Activated T-helper 2 cell treated with anti-CD3 and anti-CD28 coated beads, Interferon-gamma antibody, Interleukin-2, Interleukin-4, amounts not matched to agents 10 μg/mL and 5 μg/mL and 100 μg/mL, durations not matched to agents 14 hours and 24 hours and 36 hours (primary cell): ENCODE measurements at regions of chr15 and their contacts with region 1.

Region 1: GRCh38 chr15:72230196-72231065 is 559 bp downstream of the PKM start:
- DNase-seq: peak; percentile 68
- H3K4me3 Mint-ChIP-seq: peak overlapping the region; percentile 99
- H3K27ac Mint-ChIP-seq: peak overlapping the region; percentile 100
- H3K4me1 Mint-ChIP-seq: peaks cover 33% of the 10 kb centered on the region
- H3K27me3 Mint-ChIP-seq: no peaks in the 10 kb centered on the region

Region 2: GRCh38 chr15:72117486-72118399 is 112.7 kb before region 1 on chr15 and contains the start of gene MYO9A:
- intact Hi-C with region 1: loop called (anchors 5 kb)
- DNase-seq: peak; percentile 95
- H3K4me3 Mint-ChIP-seq: peak within 1 kb of the TSS; percentile 90
- H3K27ac Mint-ChIP-seq: peak within 1 kb of the TSS; percentile 97
- H3K4me1 Mint-ChIP-seq: peaks cover 30% of the 10 kb centered on the region
- H3K27me3 Mint-ChIP-seq: peaks cover 8% of the 10 kb centered on the region
- total RNA-seq, gene MYO9A: 25.1 and 26.2 TPM in 2 replicates

Region 3: GRCh38 chr15:72199711-72200212 is 30.7 kb before region 1 on chr15:
- intact Hi-C with region 1: loop called (anchors 2 kb)
- DNase-seq: peak; percentile 58
- H3K4me3 Mint-ChIP-seq: no peak overlapping the region
- H3K27ac Mint-ChIP-seq: no peak overlapping the region
- H3K4me1 Mint-ChIP-seq: peaks cover 15% of the 10 kb centered on the region
- H3K27me3 Mint-ChIP-seq: peaks cover 6% of the 10 kb centered on the region

Region 4: DNA sequence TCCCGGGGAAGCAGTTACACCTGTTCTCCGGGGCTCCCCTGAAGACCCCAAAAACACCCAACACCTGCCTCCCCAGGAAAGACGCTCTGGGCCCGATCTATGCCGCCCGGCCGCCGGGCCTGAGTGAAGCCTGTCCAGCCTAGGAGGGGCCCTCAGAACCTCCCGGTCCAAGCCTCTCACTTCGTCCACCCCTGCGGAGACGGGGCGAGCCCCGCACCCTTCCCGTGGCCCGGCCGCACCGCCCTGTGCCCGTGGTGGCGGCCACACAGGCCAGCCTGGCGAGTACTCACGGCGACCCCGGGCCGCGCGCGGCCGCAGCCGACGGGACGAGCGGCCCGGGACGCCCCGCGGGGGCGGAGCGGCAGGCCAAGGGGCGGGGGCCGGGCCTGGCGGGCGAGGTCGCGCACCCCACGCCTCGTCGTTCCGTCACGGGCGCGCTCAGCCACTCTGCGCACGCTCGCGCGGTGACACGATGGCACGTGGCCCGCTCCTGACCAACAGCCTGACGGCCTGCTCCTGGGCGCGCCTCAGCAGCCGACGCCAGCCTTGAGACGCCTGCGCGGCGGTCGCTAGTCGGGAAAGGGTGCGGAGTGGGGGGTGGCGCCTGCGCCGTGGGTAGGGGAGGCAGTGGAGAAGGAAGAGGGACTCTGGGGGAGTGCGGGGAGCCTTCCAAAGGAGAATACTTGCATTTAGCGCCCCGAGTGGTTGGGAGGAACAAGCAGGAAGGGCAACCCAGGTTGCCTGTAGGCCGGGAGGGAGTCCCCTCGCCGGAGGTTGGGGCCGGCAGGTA is 42.0 kb after region 1 on chr15 and contains the start of gene PARP6:
- intact Hi-C with region 1: loop called (anchors 1 kb)
- DNase-seq: peak; percentile 99
- H3K4me3 Mint-ChIP-seq: peak within 1 kb of the TSS; percentile 93
- H3K27ac Mint-ChIP-seq: peak within 1 kb of the TSS; percentile 84
- H3K4me1 Mint-ChIP-seq: peaks cover 32% of the 10 kb centered on the region
- H3K27me3 Mint-ChIP-seq: peaks cover 6% of the 10 kb centered on the region
- total RNA-seq, gene PARP6: 65.4 and 73.1 TPM in 2 replicates

Region 5: GRCh38 chr15:72375847-72376581 is 145.6 kb after region 1 on chr15 and contains the start of gene HEXA:
- intact Hi-C with region 1: loop called (anchors 2 kb)
- DNase-seq: peak; percentile 96
- H3K4me3 Mint-ChIP-seq: peak within 1 kb of the TSS; percentile 89
- H3K27ac Mint-ChIP-seq: peak within 1 kb of the TSS; percentile 91
- H3K4me1 Mint-ChIP-seq: peaks cover 27% of the 10 kb centered on the region
- H3K27me3 Mint-ChIP-seq: peaks cover under 1% of the 10 kb centered on the region
- total RNA-seq, gene HEXA: 58.2 and 63.4 TPM in 2 replicates

Region 6: GRCh38 chr15:72473614-72474465 is 243.4 kb after region 1 on chr15 and contains the start of gene ARIH1:
- intact Hi-C with region 1: loop called (anchors 1 kb)
- DNase-seq: peak; percentile 95
- H3K4me3 Mint-ChIP-seq: peak within 1 kb of the TSS; percentile 95
- H3K27ac Mint-ChIP-seq: peak within 1 kb of the TSS; percentile 99
- H3K4me1 Mint-ChIP-seq: peaks cover 31% of the 10 kb centered on the region
- H3K27me3 Mint-ChIP-seq: no peaks in the 10 kb centered on the region
- total RNA-seq, gene ARIH1: 139 and 141 TPM in 2 replicates

Region 7: DNA sequence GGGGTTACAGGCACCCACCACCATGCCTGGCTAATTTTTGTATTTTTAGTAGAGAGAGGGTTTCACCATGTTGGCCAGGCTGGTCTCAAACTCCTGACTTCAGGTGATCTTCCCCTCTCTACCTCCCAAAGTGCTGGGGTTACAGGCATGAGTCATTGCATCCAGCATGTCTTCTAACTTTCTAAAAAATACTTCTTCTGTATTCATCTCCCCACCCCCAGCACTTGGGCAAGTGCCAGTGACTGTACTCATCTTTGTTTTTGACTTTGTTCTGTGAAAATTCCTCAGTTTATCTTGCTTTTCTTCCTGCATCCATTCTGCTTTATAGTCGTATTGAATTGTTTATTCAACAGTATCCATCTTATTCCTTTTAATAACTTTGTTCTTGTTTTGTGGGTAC is 291.3 kb after region 1 on chr15:
- intact Hi-C with region 1: no loop called
- DNase-seq: no peak
- H3K4me3 Mint-ChIP-seq: no peak overlapping the region
- H3K27ac Mint-ChIP-seq: no peak overlapping the region
- H3K4me1 Mint-ChIP-seq: peaks cover 10% of the 10 kb centered on the region
- H3K27me3 Mint-ChIP-seq: no peaks in the 10 kb centered on the region

Region 8: DNA sequence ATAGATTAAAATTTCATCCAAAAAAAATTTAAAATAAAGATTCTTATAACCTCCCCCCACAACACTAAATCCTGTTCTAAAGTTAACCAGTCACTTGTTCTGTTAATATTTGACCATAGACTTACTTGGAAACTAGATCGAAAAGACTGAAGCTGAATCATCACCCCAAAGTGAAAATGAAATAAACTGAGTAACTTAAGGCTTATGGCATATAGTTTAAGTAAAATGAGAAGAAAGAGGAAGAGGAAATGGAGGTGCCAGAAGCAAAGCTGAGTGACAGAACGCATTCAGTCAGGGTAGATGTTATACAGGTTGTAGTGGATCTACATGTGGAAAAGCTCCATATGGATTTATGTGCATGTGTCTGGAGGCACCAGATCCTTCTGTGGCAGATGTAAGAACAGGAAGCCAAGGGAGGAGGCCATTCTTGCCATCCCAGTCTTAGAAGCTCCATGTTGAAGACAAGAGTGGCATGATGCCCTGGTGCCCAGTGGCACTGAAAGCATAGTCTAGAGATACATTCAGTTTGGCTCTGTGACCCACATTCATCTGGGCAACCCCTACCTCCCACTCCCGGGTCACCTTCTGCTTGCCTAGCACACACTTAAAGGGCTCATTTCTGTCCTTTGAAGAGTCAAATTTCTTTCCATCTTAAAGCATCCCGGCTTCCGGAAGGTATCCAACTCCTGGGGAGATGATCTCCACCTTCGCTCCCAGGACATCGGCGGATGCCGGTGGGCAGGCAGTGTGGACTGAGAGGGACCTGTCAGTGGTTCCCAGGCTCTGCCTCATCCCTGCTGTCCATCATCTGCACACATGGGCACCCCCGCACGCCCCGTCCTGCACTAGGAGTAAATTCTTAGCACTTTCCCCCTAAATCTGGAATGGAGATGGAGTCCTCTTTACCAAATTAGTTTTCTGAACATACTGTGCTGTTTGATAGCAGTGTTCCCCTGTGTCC is 912.7 kb after region 1 on chr15:
- intact Hi-C with region 1: loop called (anchors 10 kb)
- DNase-seq: no peak
- H3K4me3 Mint-ChIP-seq: peak overlapping the region; percentile 9
- H3K27ac Mint-ChIP-seq: peak overlapping the region; percentile 90
- H3K4me1 Mint-ChIP-seq: peaks cover 50% of the 10 kb centered on the region
- H3K27me3 Mint-ChIP-seq: no peaks in the 10 kb centered on the region